ENCODE measurements at regions of chr9 and their contacts with region 1.

Region 1: DNA sequence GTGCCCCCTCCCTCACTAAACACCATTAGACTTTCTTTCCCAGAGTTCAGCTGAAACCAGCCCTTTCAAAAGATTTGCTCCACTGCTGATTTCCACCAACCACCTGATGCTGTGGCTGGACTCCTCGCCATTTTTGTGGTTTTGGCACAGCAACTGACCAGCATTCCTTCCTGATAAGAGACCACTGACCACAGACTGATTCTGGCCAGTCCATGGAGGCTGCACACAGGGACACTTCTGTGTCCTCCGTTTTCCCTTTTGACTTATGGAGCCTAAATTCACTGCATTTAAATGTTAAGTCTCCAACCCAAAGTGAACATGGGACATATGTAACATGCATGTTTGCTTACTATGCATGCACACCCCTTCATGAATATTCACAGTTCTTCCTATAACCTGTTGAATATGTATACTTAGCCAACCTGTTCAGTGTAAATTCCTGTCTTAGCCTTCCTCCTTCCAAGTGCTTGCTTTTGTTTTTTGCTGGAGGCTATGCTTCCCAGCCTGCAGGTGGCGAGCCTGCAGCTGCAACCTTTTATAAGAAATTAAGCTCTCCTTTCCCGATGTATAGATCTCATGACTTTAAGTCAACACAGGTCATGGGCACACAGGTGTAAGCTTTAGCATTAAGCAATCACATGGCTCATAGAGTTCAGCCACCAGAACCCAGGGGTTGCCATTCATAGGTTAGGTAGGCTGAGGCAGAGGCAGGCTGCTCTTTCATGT is 78.7 kb downstream of the ACTL7B start:
- DNase-seq: no peak
- ATAC-seq: peak; percentile 70
- H3K4me3 ChIP-seq: no peak overlapping the region
- H3K27ac ChIP-seq: no peak overlapping the region
- H3K4me1 ChIP-seq: peaks cover 0 to 3% of the 10 kb centered on the region in 2 experiments; a peak in 1 of 4 replicates
- H3K27me3 ChIP-seq: no peaks in the 10 kb centered on the region
- CTCF ChIP-seq: peak; percentile 47 to 58 (median 52); a peak in 5 of 6 replicates
- POLR2A ChIP-seq: no peak
- RAD21 ChIP-seq: peak; percentile 61

Region 2: GRCh38 chr9:108257382-108257781 is 519.7 kb before region 1 on chr9:
- CTCF ChIA-PET with region 1: no interaction called
- POLR2A ChIA-PET with region 1: no interaction called
- RAD21 ChIA-PET with region 1: no interaction called
- intact Hi-C with region 1: no loop called
- DNase-seq: no peak
- ATAC-seq: no peak
- H3K4me3 ChIP-seq: no peak overlapping the region
- H3K27ac ChIP-seq: no peak overlapping the region
- H3K4me1 ChIP-seq: no peaks in the 10 kb centered on the region
- H3K27me3 ChIP-seq: no peaks in the 10 kb centered on the region
- CTCF ChIP-seq: no peak
- POLR2A ChIP-seq: no peak
- RAD21 ChIP-seq: no peak

Region 3: DNA sequence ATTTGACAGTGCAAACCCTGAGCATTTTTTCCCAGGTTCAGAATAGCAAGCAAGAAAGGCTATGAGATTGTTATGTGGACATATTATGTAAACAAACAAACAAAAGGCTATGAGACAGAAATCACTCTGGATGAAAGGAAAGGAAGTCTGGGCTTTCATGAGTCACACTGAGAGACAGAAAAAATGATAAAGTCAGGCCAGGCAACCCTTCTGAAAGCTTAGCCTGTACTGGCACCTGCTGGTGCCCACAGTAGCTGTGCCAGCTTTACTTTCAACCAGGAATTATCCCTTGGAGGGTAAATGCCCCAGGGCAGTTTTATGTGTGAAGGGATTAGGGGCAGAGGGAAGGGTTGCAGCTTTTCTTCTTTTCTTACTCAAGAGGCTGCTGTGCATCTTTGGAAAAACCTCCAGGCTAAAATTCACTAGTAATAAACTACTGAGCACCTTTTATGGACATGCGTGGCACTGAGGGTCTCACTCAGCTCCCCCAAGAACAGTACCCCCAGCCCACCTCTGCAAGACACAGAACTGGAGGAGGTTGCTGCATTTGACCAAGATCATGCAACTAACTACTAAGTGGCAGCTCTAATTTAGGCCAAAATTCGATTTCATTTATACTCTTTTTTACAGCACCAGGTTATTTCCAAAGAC is 37.0 kb after region 1 on chr9:
- CTCF ChIA-PET with region 1: interaction called, 15 read pairs
- POLR2A ChIA-PET with region 1: no interaction called
- RAD21 ChIA-PET with region 1: interaction called in 1 of 2 experiments, 4 read pairs
- intact Hi-C with region 1: loop called (anchors 1 kb)
- DNase-seq: peak; percentile 38
- ATAC-seq: peak; percentile 79
- H3K4me3 ChIP-seq: no peak overlapping the region
- H3K27ac ChIP-seq: no peak overlapping the region
- H3K4me1 ChIP-seq: peaks cover 3 to 23% of the 10 kb centered on the region in 2 experiments; a peak in 3 of 4 replicates
- H3K27me3 ChIP-seq: no peaks in the 10 kb centered on the region
- CTCF ChIP-seq: peak; percentile 61 to 78 (median 68); a peak in 5 of 6 replicates
- POLR2A ChIP-seq: no peak
- RAD21 ChIP-seq: peak; percentile 94

Region 4: DNA sequence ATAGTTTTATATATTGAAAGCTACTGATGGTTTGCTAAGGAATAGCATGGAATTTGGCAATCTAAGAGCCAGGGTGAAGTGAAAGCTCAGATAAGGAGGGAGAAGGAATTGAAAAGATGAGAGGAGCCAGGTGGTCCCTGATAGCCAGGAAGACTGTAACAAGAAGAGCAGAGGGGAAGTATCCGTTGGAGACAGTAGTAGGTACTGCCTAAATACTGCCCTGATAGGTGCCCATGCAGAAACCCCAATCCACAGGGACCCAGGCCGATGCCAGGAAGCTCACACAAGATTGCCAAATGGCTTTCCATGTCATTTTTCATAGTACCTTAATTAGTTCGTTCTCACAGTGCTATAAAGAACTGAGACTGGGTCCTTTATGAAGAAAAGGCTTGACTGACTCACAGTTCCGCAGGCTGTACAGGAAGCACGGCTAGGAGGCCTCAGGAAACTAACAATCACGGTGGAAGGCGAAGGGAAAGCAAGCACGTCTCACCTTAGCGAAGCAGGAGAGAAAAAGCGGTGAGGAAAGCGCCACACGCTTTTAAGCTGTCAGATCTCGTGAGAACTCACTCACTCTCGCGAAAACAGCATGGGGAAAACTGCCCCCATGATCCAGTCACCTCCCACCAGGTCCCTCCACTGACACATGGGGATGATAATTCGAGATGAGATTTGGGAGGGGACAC is 65.7 kb after region 1 on chr9:
- CTCF ChIA-PET with region 1: no interaction called
- POLR2A ChIA-PET with region 1: no interaction called
- RAD21 ChIA-PET with region 1: no interaction called
- intact Hi-C with region 1: no loop called
- DNase-seq: no peak
- ATAC-seq: no peak
- H3K4me3 ChIP-seq: no peak overlapping the region
- H3K27ac ChIP-seq: no peak overlapping the region
- H3K4me1 ChIP-seq: peaks cover 0 to 3% of the 10 kb centered on the region in 2 experiments; a peak in 1 of 4 replicates
- H3K27me3 ChIP-seq: no peaks in the 10 kb centered on the region
- CTCF ChIP-seq: no peak
- POLR2A ChIP-seq: no peak
- RAD21 ChIP-seq: no peak

Measured in HCT116 (cell line).